ENCODE measurements at regions of chr12 and their contacts with region 1.

Region 1: DNA sequence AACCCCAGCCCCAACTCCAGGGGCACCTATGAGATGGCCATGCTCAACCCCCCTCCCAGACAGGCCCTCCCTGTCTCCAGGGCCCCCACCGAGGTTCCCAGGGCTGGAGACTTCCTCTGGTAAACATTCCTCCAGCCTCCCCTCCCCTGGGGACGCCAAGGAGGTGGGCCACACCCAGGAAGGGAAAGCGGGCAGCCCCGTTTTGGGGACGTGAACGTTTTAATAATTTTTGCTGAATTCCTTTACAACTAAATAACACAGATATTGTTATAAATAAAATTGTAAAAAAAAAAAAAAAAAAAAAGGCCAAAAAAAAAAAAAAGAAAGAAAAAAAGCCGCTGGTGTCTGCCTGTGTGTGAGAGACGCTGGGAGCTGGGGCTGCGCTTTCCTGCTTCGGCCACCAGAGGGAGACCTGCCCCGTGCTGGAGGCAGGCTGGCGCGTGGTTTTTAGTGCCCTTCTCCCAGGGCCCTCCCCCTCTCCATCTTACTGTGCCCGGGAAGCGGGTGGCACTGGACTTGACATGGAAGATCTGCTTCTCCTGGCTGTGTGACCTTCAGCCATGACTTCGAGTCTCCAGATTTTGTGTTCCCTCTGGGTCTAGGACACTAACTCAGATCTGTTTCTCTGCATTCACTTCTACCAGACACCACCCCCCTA is 3.4 kb upstream of the NXPH4 start:
- DNase-seq: peak; percentile 74 to 89 (median 84)
- ATAC-seq: peak; percentile 62 to 73
- H3K4me3 Mint-ChIP-seq: peak overlapping the region in 7 of 10 donors; percentile 2 to 47 (median 39)
- H3K27ac Mint-ChIP-seq: peak overlapping the region in 4 of 10 donors; percentile 8 to 86 (median 56)
- H3K4me1 Mint-ChIP-seq: peaks cover 28 to 41% (median 39%) of the 10 kb centered on the region in 4 donors
- H3K27me3 Mint-ChIP-seq: peaks cover 32 to 49% (median 40%) of the 10 kb centered on the region in 5 donors

Region 2: DNA sequence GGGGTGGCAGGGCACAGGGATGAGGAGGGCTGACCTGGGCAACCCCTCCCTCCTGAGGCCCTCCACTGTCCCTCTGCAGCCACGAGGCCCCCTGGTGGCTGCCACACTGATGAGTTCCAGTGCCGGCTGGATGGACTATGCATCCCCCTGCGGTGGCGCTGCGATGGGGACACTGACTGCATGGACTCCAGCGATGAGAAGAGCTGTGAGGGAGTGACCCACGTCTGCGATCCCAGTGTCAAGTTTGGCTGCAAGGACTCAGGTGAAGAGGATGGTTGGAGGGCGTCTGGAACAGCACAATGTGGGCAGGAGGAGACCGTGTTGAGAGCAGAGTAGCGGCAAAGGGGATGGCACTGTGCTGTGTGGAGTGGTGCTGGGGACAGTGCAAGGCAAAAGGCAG is 40.1 kb before region 1 on chr12:
- POLR2A ChIA-PET with region 1: no interaction called
- DNase-seq: peak in 3 of 10 donors; percentile 7 to 12 (median 9)
- ATAC-seq: peak in 1 of 2 donors; percentile 61
- H3K4me3 Mint-ChIP-seq: no peak overlapping the region
- H3K27ac Mint-ChIP-seq: peak overlapping the region in 1 of 10 donors; percentile 43
- H3K4me1 Mint-ChIP-seq: peaks cover 0 to 11% (median 1%) of the 10 kb centered on the region in 4 donors
- H3K27me3 Mint-ChIP-seq: peaks cover 0 to 3% (median 1%) of the 10 kb centered on the region in 5 donors

Region 3: DNA sequence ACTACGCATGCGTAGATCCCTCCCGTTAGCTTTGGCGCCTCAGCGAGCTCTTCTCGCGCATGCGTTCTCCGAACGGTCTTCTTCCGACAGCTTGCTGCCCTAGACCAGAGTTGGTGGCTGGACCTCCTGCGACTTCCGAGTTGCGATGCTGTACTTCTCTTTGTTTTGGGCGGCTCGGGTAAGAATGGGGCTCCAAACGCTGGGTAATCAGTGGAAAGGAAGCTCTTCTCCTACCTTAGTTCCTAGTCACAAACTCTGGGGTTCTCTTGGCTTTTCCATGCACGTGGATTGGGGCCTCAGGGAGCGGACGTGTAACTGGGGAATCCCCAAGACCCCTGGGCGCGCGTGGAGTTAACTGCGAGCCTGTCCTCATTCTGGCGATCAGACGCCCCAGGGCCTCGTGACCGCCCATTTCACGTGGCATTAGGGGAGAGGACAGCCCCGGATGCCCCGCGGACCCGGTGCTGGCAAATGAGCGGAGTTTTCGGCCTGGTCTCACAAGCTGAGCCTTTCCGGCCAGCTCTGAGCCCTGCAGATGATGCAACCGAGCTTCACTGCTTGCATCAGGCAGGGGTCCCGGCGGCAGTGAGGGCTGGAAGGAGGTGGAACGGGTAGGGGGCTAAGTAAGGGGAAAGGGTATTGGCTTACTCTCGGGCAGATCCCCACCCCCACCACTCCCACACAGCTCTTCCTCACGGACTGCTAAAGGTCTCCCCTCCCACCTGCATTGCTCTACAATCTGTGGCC is 16.6 kb after region 1 on chr12 and contains the start of gene SHMT2:
- POLR2A ChIA-PET with region 1: interaction called, 28 read pairs
- DNase-seq: peak; percentile 79 to 97 (median 90)
- ATAC-seq: peak; percentile 36 to 66
- H3K4me3 Mint-ChIP-seq: peak within 1 kb of the TSS; percentile 90 to 98 (median 94)
- H3K27ac Mint-ChIP-seq: peak within 1 kb of the TSS; percentile 68 to 95 (median 88)
- H3K4me1 Mint-ChIP-seq: peaks cover 29 to 69% (median 60%) of the 10 kb centered on the region in 4 donors
- H3K27me3 Mint-ChIP-seq: peaks cover 16 to 33% (median 17%) of the 10 kb centered on the region in 5 donors
- polyA plus RNA-seq, gene SHMT2: 27.3 to 31.2 (median 28.8) TPM

Region 4: GRCh38 chr12:57238854-57239554 is 25.8 kb after region 1 on chr12:
- POLR2A ChIA-PET with region 1: interaction called, 72 read pairs
- DNase-seq: peak; percentile 68 to 92 (median 84)
- ATAC-seq: peak; percentile 54 to 58
- H3K4me3 Mint-ChIP-seq: peak overlapping the region; percentile 90 to 98 (median 94)
- H3K27ac Mint-ChIP-seq: peak overlapping the region in 4 of 10 donors; percentile 31 to 87 (median 63)
- H3K4me1 Mint-ChIP-seq: peaks cover 44 to 87% (median 70%) of the 10 kb centered on the region in 4 donors
- H3K27me3 Mint-ChIP-seq: peaks cover 31 to 83% (median 57%) of the 10 kb centered on the region in 5 donors

Measured in naive thymus-derived CD8-positive, alpha-beta T cell (primary cell).